ENCODE measurements at regions of chr18 and their contacts with region 1.

Region 1: GRCh38 chr18:7177116-7177744 is 53.7 kb upstream of the LRRC30 start:
- DNase-seq: peak; percentile 76 to 77
- H3K4me3 ChIP-seq: no peak overlapping the region
- H3K4me3 Mint-ChIP-seq: no peak overlapping the region
- H3K27ac Mint-ChIP-seq: no peak overlapping the region
- H3K4me1 ChIP-seq: peaks cover 36% of the 10 kb centered on the region
- H3K4me1 Mint-ChIP-seq: peaks cover 15% of the 10 kb centered on the region
- H3K27me3 ChIP-seq: no peaks in the 10 kb centered on the region
- H3K27me3 Mint-ChIP-seq: no peaks in the 10 kb centered on the region
- CTCF ChIP-seq: peak; percentile 81 to 91

Region 2: DNA sequence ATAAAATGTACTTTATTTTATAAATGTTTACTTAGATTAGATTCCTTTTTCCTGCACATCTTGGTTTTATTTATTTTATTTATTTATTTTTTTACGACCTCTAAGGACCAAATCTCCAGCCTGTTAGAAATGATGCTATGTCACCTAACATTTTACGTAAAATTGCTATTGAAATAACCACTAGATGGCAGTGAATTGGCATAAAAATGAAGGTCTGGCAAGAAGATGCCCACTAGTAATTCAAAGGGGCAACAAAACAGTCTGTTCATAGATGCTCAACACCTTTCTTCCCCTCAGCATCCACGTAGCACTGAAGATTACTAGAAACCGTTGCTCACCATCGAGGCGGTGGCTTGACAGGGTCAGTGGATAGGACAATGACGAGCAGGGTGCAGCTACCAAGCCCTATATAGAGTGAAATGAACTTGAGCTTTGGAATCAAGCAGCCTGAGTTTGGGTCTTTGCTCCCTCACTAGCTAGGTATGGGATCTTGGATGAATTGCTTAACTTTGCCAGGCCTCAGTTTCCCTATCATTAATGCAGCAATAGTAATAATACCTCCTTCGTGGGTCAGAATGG is 633.8 kb before region 1 on chr18:
- CTCF ChIA-PET with region 1: no interaction called
- POLR2A ChIA-PET with region 1: no interaction called
- intact Hi-C with region 1: loop called (anchors 10 kb)
- DNase-seq: peak in 1 of 2 experiments; percentile 35
- H3K4me3 ChIP-seq: no peak overlapping the region
- H3K4me3 Mint-ChIP-seq: no peak overlapping the region
- H3K27ac Mint-ChIP-seq: no peak overlapping the region
- H3K4me1 ChIP-seq: peaks cover 7% of the 10 kb centered on the region
- H3K4me1 Mint-ChIP-seq: peaks cover 7% of the 10 kb centered on the region
- H3K27me3 ChIP-seq: no peaks in the 10 kb centered on the region
- H3K27me3 Mint-ChIP-seq: no peaks in the 10 kb centered on the region
- CTCF ChIP-seq: peak; percentile 64 to 65

Region 3: GRCh38 chr18:7021994-7022840 is 155.0 kb before region 1 on chr18:
- CTCF ChIA-PET with region 1: interaction called, 14 read pairs
- POLR2A ChIA-PET with region 1: no interaction called
- intact Hi-C with region 1: no loop called
- DNase-seq: peak; percentile 73 to 78
- H3K4me3 ChIP-seq: no peak overlapping the region
- H3K4me3 Mint-ChIP-seq: no peak overlapping the region
- H3K27ac Mint-ChIP-seq: no peak overlapping the region
- H3K4me1 ChIP-seq: no peaks in the 10 kb centered on the region; the same call in 1 of the 2 replicates
- H3K4me1 Mint-ChIP-seq: no peaks in the 10 kb centered on the region
- H3K27me3 ChIP-seq: no peaks in the 10 kb centered on the region
- H3K27me3 Mint-ChIP-seq: no peaks in the 10 kb centered on the region
- CTCF ChIP-seq: peak; percentile 73 to 77

Region 4: DNA sequence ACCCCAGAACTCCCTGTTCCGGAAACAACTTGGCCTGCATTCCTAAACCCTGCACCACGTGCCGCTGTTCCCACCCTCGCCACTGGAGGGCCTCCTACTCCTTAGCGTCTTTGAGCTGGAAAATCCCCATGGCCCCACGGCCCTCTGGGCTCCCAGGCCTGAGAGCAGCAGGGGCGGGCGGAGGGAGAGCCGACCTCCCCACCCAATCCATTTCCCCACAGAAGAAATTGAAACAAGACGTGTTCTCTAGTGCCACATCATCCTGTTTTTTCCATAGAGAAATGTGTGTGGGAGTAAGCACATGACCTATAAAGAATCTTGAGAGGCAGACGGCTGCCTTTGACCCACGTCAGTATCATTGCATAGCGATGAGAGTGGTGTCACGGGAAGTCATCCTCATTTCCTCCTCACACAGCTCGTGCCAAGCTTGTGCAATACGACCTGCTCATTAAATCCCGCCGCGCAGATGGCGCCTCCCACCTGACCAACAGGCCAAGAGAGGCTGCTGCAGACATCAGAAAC is 138.8 kb before region 1 on chr18:
- CTCF ChIA-PET with region 1: interaction called, 32 read pairs
- POLR2A ChIA-PET with region 1: interaction called, 3 read pairs
- intact Hi-C with region 1: loop called (anchors 1 kb)
- DNase-seq: peak; percentile 93 to 94
- H3K4me3 ChIP-seq: peak overlapping the region; percentile 31
- H3K4me3 Mint-ChIP-seq: peak overlapping the region; percentile 55
- H3K27ac Mint-ChIP-seq: peak overlapping the region; percentile 85
- H3K4me1 ChIP-seq: peaks cover 53% of the 10 kb centered on the region
- H3K4me1 Mint-ChIP-seq: peaks cover 35% of the 10 kb centered on the region
- H3K27me3 ChIP-seq: no peaks in the 10 kb centered on the region
- H3K27me3 Mint-ChIP-seq: no peaks in the 10 kb centered on the region
- CTCF ChIP-seq: peak; percentile 82 to 89

Region 5: DNA sequence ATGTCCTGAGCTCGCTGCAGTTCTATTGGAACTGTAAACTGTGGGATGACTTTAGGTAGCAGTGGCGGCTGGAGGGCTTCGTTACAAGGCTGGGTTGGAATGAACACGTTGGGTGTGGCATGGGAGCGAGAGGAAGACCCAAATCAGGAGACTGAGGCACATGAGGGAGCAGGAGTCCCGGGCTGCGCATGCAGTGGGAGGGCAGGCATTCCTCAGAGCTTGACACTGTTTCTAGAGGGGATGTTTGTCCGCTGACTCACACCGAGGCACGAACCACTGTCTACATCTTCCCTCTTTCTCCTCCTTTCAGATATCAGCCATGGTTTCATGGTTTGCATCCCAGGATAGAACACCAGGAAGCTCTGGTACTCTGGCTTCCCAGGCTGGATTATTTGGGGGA is 19.0 kb before region 1 on chr18:
- CTCF ChIA-PET with region 1: interaction called, 16 read pairs
- POLR2A ChIA-PET with region 1: interaction called, 3 read pairs
- intact Hi-C with region 1: loop called (anchors 2 kb)
- DNase-seq: peak; percentile 78 to 87
- H3K4me3 ChIP-seq: peak overlapping the region; percentile 18; the same call in 1 of the 2 replicates
- H3K4me3 Mint-ChIP-seq: peak overlapping the region; percentile 67
- H3K27ac Mint-ChIP-seq: peak overlapping the region; percentile 77
- H3K4me1 ChIP-seq: peaks cover 60% of the 10 kb centered on the region
- H3K4me1 Mint-ChIP-seq: peaks cover 41% of the 10 kb centered on the region
- H3K27me3 ChIP-seq: no peaks in the 10 kb centered on the region
- H3K27me3 Mint-ChIP-seq: no peaks in the 10 kb centered on the region
- CTCF ChIP-seq: no peak

Region 6: DNA sequence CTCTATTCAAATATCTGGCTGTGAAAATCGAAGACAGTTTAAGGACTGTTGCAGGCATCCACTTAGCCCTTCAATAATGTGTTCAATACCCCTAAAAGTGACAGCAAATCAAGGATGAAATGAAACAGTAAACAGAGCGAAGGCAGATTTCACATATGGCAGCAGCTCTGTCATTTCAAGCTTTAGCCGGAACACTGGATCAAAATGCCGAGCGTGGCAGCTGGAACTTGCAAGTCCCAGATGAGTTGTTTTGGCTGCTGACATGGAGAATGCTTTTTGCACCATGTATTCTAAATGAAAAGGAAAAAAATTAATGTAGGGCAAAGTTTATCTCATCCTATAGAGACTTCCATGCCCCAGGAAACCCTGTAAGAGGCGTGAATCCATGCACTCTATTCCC is 71.6 kb after region 1 on chr18:
- CTCF ChIA-PET with region 1: no interaction called
- POLR2A ChIA-PET with region 1: no interaction called
- intact Hi-C with region 1: no loop called
- DNase-seq: no peak
- H3K4me3 ChIP-seq: no peak overlapping the region
- H3K4me3 Mint-ChIP-seq: no peak overlapping the region
- H3K27ac Mint-ChIP-seq: no peak overlapping the region
- H3K4me1 ChIP-seq: no peaks in the 10 kb centered on the region
- H3K4me1 Mint-ChIP-seq: no peaks in the 10 kb centered on the region
- H3K27me3 ChIP-seq: no peaks in the 10 kb centered on the region
- H3K27me3 Mint-ChIP-seq: peaks cover 5% of the 10 kb centered on the region
- CTCF ChIP-seq: no peak

Region 7: GRCh38 chr18:7358989-7359726 is 181.9 kb after region 1 on chr18:
- CTCF ChIA-PET with region 1: no interaction called
- POLR2A ChIA-PET with region 1: no interaction called
- intact Hi-C with region 1: no loop called
- DNase-seq: no peak
- H3K4me3 ChIP-seq: no peak overlapping the region
- H3K4me3 Mint-ChIP-seq: no peak overlapping the region
- H3K27ac Mint-ChIP-seq: no peak overlapping the region
- H3K4me1 ChIP-seq: no peaks in the 10 kb centered on the region
- H3K4me1 Mint-ChIP-seq: no peaks in the 10 kb centered on the region
- H3K27me3 ChIP-seq: no peaks in the 10 kb centered on the region
- H3K27me3 Mint-ChIP-seq: peaks cover 2% of the 10 kb centered on the region
- CTCF ChIP-seq: no peak

Measured in Caco-2 (cell line).